AG04449 (cell line): ENCODE measurements at regions of chrX and their contacts with region 1.

Region 1: DNA sequence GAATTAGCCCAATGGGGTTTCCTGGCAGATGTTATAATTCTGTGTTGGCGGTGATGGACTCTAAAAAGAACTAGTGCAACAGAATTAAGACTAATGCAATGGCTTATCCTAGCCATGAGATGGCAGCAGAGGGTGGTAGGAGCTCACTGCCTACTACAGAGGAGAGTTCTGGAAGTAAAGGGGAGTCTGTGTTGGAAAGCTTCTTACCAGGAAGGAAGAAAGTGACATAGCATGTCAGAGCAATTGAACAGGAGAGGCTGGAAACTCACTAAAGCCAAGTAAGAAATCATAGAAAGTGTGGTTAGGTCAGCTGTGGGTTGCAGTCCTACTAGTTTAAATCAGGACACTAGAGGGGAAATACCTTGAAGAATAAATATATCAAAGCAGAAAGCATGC is 6.3 kb upstream of the TRPC5OS start:
- DNase-seq: peak; percentile 5
- H3K4me3 ChIP-seq: no peak overlapping the region
- CTCF ChIP-seq: peak; percentile 55

Region 2: GRCh38 chrX:111671668-111672067 is 198.0 kb before region 1 on chrX:
- CTCF ChIA-PET with region 1: no interaction called
- POLR2A ChIA-PET with region 1: no interaction called
- DNase-seq: no peak
- H3K4me3 ChIP-seq: no peak overlapping the region
- CTCF ChIP-seq: no peak

Region 3: DNA sequence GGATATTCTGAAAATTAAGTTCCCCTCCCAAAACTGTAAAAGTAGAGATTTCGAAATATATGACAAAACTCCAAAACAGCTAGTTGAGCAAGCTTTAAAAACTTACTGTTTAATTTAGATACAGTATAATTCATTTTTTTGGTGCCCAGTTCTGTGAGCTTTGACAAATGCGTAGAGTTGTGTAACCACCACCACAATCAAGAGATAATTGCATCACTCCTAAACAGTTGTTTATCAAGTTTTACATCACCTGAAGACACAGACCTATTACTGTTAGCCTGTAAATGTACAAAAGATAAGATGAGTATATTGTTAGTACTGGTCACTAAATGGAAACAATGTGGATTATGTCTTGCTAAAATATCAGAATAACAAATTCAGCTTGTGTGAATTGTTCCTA is 126.3 kb before region 1 on chrX:
- CTCF ChIA-PET with region 1: no interaction called
- POLR2A ChIA-PET with region 1: no interaction called
- DNase-seq: no peak
- H3K4me3 ChIP-seq: no peak overlapping the region
- CTCF ChIP-seq: no peak

Region 4: DNA sequence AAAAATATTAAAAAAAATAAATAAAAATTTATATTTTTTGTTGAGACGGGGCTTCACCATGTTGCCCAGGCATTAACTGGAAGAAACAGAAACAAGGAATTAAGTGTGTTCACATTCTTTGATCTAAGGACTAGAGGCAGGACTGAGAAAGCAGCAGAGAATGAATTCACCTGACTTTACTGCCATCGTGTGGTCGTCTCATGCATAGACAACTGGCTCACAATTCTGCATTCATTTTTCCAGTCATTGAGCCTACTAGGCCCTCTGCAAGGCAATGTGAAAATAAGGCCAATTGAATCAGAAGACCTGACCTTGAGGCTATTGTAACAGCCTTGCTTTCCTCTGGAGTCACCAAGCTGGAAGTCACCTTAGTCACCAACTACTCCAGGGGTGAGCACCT is 772.7 kb after region 1 on chrX:
- CTCF ChIA-PET with region 1: interaction called, 36 read pairs
- POLR2A ChIA-PET with region 1: no interaction called
- DNase-seq: no peak
- H3K4me3 ChIP-seq: no peak overlapping the region
- CTCF ChIP-seq: peak; percentile 61